SK-N-SH (cell line): ENCODE measurements at regions of chr11 and their contacts with region 1.

Region 1: GRCh38 chr11:46338988-46339666 is 8.1 kb upstream of the DGKZ start:
- DNase-seq: no peak
- H3K4me3 ChIP-seq: no peak overlapping the region
- H3K27ac ChIP-seq: no peak overlapping the region
- H3K4me1 ChIP-seq: peaks cover 9 to 13% of the 10 kb centered on the region in 2 experiments; a peak in 3 of 4 replicates
- H3K27me3 ChIP-seq: no peaks in the 10 kb centered on the region
- CTCF ChIP-seq: no peak
- EP300 ChIP-seq: no peak
- RAD21 ChIP-seq: no peak

Region 2: DNA sequence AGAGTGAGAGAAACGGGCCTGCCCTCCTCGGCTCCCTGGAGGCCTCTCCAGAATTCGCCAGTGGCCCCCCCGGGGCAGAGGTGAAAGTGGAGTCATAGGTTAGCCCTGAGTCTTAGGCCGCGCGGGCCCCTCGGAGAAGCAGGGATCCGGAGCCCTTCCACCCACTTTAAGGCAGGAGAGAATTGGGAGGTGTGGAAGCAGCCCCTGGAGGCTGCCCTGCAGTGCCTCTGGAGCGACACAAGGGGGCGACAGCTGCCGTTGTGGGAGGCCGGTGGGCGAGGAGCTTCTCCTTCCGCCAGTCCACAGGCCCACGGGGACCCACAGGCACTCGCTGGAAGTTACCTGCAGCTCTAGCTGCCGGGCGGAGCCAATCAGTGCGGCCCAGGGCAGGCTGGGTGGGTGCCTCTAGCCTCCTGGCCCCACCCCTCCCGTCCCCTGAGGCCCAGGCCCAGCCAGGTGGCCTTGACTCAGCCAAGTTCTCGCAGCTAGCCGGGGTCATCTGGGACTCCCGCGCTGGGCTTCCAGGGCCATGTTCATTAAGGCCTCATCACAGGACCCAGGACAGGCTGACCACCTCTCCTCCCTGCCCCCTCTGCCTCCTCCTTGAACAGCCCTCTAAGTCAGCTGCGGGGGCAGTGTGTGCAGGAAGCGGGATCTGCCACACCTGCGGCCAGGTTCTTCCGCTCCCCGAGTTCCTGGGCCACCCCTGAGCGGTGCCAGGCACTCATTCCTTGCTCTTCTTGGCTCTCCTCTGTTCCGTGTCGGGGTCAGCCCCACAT is 13.1 kb after region 1 on chr11:
- CTCF ChIA-PET with region 1: interaction called, 423 read pairs
- POLR2A ChIA-PET with region 1: no interaction called
- DNase-seq: peak; percentile 85
- H3K4me3 ChIP-seq: no peak overlapping the region; a peak in 1 of 4 replicates
- H3K27ac ChIP-seq: no peak overlapping the region
- H3K4me1 ChIP-seq: peaks cover 14 to 19% of the 10 kb centered on the region in 2 experiments; a peak in 3 of 4 replicates
- H3K27me3 ChIP-seq: no peaks in the 10 kb centered on the region
- CTCF ChIP-seq: peak; percentile 82
- EP300 ChIP-seq: no peak
- RAD21 ChIP-seq: peak; percentile 75

Region 3: GRCh38 chr11:46574656-46575055 is 235.5 kb after region 1 on chr11:
- CTCF ChIA-PET with region 1: no interaction called
- POLR2A ChIA-PET with region 1: no interaction called
- DNase-seq: no peak
- H3K4me3 ChIP-seq: no peak overlapping the region
- H3K27ac ChIP-seq: no peak overlapping the region
- H3K4me1 ChIP-seq: no peaks in the 10 kb centered on the region; a peak in 1 of 4 replicates
- H3K27me3 ChIP-seq: no peaks in the 10 kb centered on the region
- CTCF ChIP-seq: no peak
- EP300 ChIP-seq: no peak
- RAD21 ChIP-seq: no peak